Lower leg skin (tissue), 4 donors: ENCODE measurements at regions of chr16 and their contacts with region 1.

Region 1: DNA sequence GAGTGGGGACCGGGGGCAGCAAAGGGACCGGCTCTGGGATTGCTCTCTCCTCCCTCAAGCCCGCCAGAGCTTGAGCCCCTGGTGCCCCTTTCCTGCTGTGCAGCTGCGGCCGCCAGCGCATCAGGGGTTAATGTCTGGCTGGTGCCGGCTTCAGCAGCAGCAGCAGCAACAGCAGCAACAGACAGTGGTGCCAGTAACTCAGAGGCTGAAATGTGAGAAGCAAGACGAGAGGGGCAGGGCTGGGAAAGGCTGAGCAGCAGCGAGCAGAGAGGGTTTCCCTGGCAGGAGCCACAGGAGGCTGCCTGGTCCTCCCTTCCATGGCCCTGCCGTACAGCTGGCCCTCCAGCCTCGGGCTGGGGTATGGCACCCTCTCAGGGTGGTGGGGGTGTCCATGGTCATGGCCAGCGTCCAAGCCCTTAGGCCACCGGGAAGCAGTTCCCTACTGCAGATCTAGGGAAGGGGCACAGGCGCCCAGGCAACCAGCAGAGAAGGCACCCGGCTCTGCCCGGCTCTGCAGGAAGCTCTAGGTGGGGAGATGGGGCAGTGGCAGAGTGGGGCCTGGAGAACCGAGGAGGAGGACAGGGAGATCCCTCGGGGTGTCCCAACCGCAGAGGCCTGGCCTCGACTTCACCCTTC is 21.1 kb upstream of the TFAP4 start:
- DNase-seq: no peak
- H3K4me3 ChIP-seq: no peak overlapping the region
- CTCF ChIP-seq: no peak
- POLR2A ChIP-seq: no peak

Region 2: GRCh38 chr16:4330277-4330874 is 36.4 kb after region 1 on chr16:
- intact Hi-C with region 1: loop called (anchors 5 kb)
- DNase-seq: peak; percentile 65 to 94
- H3K4me3 ChIP-seq: no peak overlapping the region
- CTCF ChIP-seq: peak in 1 of 3 donors; percentile 78
- POLR2A ChIP-seq: no peak